Head of caudate nucleus (tissue), 42 donors: ENCODE measurements at regions of chr7 and their contacts with region 1.

Region 1: GRCh38 chr7:127392566-127393367 is at the start of gene ZNF800:
- DNase-seq: peak; percentile 80 to 97 (median 93)

Region 2: DNA sequence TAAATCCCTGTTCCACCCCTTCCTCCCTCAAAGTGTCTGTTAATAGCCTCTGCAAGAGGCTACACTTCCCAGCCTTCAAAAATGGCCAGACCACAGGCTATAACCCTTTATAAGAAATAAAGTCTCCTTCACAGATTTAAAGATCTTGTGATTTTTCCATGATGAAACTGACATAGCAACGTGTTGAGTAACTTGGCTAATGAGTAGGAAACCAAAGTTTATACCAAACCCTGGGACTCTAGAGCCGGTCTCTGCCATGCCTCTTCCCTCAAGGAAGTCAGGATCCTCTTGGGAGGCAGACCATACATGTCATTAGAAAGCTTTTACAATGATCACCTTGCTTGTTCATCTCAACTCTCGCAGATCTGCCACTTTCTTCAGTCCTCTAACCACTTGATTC is 184.4 kb before region 1 on chr7:
- intact Hi-C with region 1: no loop called
- DNase-seq: no peak

Region 3: DNA sequence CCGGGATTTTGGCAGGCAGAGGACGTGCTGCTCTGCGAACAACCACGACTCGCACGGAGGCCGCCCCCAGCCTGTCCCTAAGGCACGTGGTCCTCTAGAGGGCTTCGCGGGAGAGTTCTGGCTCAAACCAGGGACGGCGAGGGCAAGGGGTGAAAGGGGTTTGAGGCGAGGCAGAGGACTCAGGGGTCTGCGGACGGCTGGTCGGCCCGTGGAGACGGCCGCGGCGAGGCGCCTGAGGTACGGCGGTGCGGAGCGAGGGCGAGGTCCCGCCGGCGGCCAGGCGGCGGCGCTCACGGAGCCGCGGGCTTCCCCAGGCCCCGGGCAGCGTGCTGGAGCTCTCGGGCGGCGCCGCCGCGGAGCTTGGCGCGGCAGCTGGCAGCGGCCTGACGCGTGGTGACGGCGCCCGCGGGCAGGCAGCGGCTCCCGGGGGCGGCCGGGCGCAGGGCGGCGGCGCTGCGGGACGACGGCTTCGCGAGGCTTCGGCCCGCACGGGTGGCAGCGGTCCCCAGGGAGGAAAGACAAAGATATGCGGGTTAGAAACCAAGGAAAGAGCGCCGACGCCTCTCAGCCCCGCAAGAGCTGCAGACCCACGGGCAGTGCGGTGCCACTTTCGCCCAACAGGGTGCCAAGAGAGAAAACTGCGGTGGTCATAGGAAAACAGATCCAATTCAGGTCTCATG is 45.1 kb before region 1 on chr7:
- intact Hi-C with region 1: loop called (anchors 5 kb)
- DNase-seq: peak in 40 of 42 donors; percentile 19 to 79 (median 57)

Region 4: GRCh38 chr7:127585044-127585953 is 192.5 kb after region 1 on chr7 and contains the start of gene GCC1:
- intact Hi-C with region 1: loop called (anchors 5 kb)
- DNase-seq: peak; percentile 85 to 98 (median 95)